Panc1 (cell line): ENCODE measurements at regions of chr10 and their contacts with region 1.

Region 1: DNA sequence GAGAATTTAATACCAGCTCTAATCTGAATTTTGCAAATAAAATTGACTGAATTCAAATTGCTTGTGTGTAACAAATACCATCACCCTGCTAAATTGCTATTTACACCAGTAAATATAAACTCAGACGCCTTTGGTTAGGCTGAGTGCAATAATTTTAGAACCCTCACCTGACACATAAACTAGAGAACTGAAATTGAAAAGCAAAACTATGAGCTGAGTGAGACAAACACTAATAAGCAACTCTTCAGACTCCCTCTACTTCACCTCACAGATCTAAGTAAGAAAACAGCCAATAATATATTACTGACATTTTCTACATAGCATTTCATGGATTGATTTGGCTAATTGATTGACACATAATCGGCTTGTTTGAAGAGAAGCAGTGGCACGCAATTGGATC is 621.2 kb downstream of the REEP3 start:
- DNase-seq: no peak
- ATAC-seq: no peak
- H3K4me3 ChIP-seq: no peak overlapping the region
- H3K27ac ChIP-seq: no peak overlapping the region
- H3K4me1 ChIP-seq: no peaks in the 10 kb centered on the region
- H3K27me3 ChIP-seq: no peaks in the 10 kb centered on the region
- CTCF ChIP-seq: no peak

Region 2: GRCh38 chr10:64408391-64409183 is 266.2 kb after region 1 on chr10:
- CTCF ChIA-PET with region 1: interaction called, 14 read pairs
- POLR2A ChIA-PET with region 1: no interaction called
- in situ Hi-C with region 1: no loop called
- intact Hi-C with region 1: no loop called
- DNase-seq: no peak
- ATAC-seq: no peak
- H3K4me3 ChIP-seq: no peak overlapping the region
- H3K27ac ChIP-seq: no peak overlapping the region
- H3K4me1 ChIP-seq: no peaks in the 10 kb centered on the region
- H3K27me3 ChIP-seq: no peaks in the 10 kb centered on the region
- CTCF ChIP-seq: no peak